ENCODE measurements at regions of chr2 and their contacts with region 1.

Region 1: DNA sequence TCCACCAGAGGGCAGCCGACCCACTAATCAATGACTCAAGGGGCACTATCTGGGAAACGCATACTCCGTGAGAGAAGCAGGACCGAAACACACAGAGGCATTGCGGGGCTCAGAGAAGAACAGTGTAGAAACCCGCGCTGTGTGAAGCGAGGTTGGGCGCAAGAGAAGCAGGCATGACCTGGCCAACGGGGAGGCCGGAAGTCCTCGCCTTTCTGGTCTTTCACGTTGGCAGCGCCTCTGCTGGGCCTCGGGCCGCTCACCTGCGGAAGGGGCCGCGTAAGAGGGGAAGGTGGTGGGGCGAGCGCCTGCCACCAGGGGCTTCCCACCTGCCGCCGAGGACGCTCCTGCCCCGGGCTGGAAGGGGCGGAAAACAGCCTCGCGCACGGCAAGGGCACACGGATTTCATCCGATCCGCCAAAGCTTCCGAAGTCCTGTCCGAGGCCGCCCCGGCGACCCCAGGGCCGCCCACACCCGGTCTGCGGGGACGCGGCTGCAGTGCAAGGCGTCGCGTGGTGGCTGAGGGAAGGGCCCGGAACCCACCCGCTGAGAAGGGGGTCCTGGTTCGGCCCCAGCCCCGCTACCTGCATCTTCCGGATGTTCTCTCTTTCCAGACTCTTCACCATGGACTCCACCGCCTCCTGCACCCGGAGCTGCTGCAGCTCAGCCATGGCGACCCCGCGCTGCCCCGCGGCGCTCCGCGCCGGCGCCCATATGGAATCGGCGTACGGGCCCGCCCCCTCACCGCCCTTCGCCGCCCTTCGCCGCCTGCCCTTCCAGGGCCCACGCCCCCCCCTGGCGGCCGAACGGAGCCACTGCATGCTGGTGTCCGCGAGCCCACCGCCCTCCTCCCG is at the start of gene FAM136A:
- DNase-seq: peak; percentile 92
- H3K4me3 ChIP-seq: peak within 1 kb of the TSS; percentile 86
- H3K27ac ChIP-seq: peak within 1 kb of the TSS; percentile 85
- H3K4me1 ChIP-seq: peaks cover 13% of the 10 kb centered on the region
- H3K27me3 ChIP-seq: no peaks in the 10 kb centered on the region
- CTCF ChIP-seq: peak; percentile 85
- total RNA-seq, gene FAM136A: 71.6 and 77.7 TPM in 2 replicates

Region 2: GRCh38 chr2:69914170-69914960 is 387.2 kb before region 1 on chr2:
- CTCF ChIA-PET with region 1: interaction called, 5 read pairs
- POLR2A ChIA-PET with region 1: no interaction called
- intact Hi-C with region 1: loop called (anchors 2 kb)
- DNase-seq: peak; percentile 100
- H3K4me3 ChIP-seq: peak overlapping the region; percentile 73
- H3K27ac ChIP-seq: peak overlapping the region; percentile 89
- H3K4me1 ChIP-seq: no peaks in the 10 kb centered on the region
- H3K27me3 ChIP-seq: no peaks in the 10 kb centered on the region
- CTCF ChIP-seq: 0 out of 2 replicates have a peak, but pooled peaks have one; percentile 20

Region 3: GRCh38 chr2:70553584-70554337 is 252.2 kb after region 1 on chr2 and contains the start of gene TGFA:
- CTCF ChIA-PET with region 1: no interaction called
- POLR2A ChIA-PET with region 1: no interaction called
- intact Hi-C with region 1: loop called (anchors 5 kb)
- DNase-seq: peak; percentile 64
- H3K4me3 ChIP-seq: peak within 1 kb of the TSS; percentile 51
- H3K27ac ChIP-seq: no peak within 1 kb of the TSS
- H3K4me1 ChIP-seq: peaks cover 4% of the 10 kb centered on the region
- H3K27me3 ChIP-seq: peaks cover 69% of the 10 kb centered on the region
- CTCF ChIP-seq: peak; percentile 77
- total RNA-seq, gene TGFA: 0.13 TPM in 1 of 2 replicates, not detected in the other

Region 4: DNA sequence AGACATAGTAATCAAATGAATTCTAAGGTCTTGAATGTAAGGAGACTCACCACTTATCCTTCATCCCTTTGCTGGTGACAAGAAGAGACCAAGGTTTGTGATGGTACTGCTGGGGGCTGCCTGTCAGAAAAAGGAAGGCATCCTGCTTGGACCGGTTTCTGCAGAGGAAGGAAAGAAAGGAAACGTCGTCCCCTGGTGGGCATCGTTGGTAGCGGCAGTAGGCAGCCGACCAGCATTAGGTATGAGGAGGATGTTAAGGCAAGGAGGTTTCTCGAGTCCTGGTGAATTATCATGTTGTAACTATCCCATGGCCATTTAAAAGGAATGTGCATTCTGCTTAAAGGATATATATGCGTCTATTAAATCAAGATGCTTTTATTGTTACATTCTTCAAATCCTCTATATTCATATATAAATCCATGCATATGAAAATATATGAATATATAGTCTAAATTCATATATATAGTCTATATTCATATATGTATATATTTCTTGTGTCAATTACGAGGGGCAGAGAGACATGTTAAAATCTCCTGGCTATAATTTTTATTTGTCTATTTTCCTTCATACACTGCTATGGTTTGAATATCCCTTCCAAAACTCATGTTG is 346.4 kb after region 1 on chr2:
- CTCF ChIA-PET with region 1: interaction called, 31 read pairs
- POLR2A ChIA-PET with region 1: no interaction called
- intact Hi-C with region 1: loop called (anchors 1 kb)
- DNase-seq: peak; percentile 72
- H3K4me3 ChIP-seq: no peak overlapping the region
- H3K27ac ChIP-seq: no peak overlapping the region
- H3K4me1 ChIP-seq: no peaks in the 10 kb centered on the region
- H3K27me3 ChIP-seq: no peaks in the 10 kb centered on the region
- CTCF ChIP-seq: peak; percentile 93

Measured in A673 (cell line).